ENCODE measurements at regions of chr2 and their contacts with region 1.

Region 1: DNA sequence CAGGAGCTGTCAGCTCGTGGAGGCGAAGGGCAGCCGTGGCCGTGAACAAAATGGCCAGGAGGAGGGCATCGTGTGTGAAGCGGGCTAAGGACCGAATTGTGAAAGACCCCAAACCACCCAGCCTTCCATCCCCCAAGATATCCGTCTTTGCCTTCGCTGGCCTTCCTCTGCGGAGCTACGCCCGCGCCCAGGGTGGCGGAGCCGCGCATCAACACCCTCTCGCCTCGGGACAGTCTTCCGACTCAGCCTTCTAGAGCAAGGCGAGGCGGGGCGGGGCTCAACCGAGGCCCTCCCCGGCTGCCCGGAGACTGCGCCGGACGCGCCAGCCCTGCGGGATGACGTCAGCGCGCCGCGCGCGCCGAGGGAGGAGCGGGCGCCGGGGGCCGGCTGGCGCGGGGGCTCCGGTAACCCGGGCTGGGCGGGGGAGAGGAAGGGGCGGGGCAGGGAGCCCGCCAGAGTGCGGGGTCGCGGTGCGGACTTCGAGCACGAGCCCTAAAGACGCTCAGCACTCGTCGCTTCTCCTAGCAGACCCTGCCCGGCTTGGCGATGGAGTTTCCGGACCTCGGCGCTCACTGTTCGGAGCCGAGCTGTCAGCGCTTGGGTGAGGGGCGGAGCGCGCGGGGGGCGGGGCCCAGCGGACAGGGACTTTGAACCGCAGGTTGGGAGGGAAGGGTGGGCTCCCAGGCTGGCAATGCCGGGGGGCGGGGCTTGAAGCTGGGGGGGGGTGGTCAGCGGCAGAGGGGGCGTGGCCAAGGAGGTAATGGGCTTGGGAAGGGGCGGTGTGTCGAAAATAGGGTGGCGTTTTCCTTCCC is at the start of gene ZFAND2B:
- DNase-seq: peak; percentile 94 to 96
- ATAC-seq: peak; percentile 97 to 99 (median 98)
- H3K4me3 ChIP-seq: peak within 1 kb of the TSS; percentile 33 to 82 (median 70)
- H3K27ac ChIP-seq: peak within 1 kb of the TSS; percentile 80 to 99 (median 95)
- H3K4me1 ChIP-seq: peaks cover 8 to 31% (median 20%) of the 10 kb centered on the region in 9 donors
- H3K27me3 ChIP-seq: no peaks in the 10 kb centered on the region
- CTCF ChIP-seq: peak in 1 of 9 donors; percentile 7
- total RNA-seq, gene ZFAND2B: 11.5 to 19.2 (median 16.4) TPM

Region 2: GRCh38 chr2:219160186-219161017 is 46.2 kb before region 1 on chr2 and contains the start of gene NHEJ1:
- intact Hi-C with region 1: loop called in 2 of 10 experiments (anchors 2 to 5 kb)
- DNase-seq: peak; percentile 97 to 98
- ATAC-seq: peak; percentile 96 to 98 (median 97)
- H3K4me3 ChIP-seq: peak within 1 kb of the TSS; percentile 40 to 74 (median 62)
- H3K27ac ChIP-seq: peak within 1 kb of the TSS; percentile 80 to 94 (median 92)
- H3K4me1 ChIP-seq: peaks cover 0 to 19% (median 11%) of the 10 kb centered on the region in 9 donors
- H3K27me3 ChIP-seq: no peaks in the 10 kb centered on the region
- CTCF ChIP-seq: peak; percentile 99 to 100 (median 99)
- total RNA-seq, gene NHEJ1: 4.7 to 12.0 (median 7.1) TPM

Region 3: GRCh38 chr2:219171231-219171651 is 35.4 kb before region 1 on chr2:
- intact Hi-C with region 1: loop called in 3 of 10 experiments (anchors 2 to 5 kb)
- DNase-seq: peak in 1 of 2 donors; percentile 48
- ATAC-seq: peak; percentile 27 to 77 (median 64)
- H3K4me3 ChIP-seq: no peak overlapping the region
- H3K27ac ChIP-seq: peak overlapping the region in 8 of 10 donors; percentile 26 to 72 (median 48)
- H3K4me1 ChIP-seq: peaks cover 4 to 38% (median 23%) of the 10 kb centered on the region in 9 donors
- H3K27me3 ChIP-seq: no peaks in the 10 kb centered on the region
- CTCF ChIP-seq: peak; percentile 51 to 77 (median 69)

Region 4: DNA sequence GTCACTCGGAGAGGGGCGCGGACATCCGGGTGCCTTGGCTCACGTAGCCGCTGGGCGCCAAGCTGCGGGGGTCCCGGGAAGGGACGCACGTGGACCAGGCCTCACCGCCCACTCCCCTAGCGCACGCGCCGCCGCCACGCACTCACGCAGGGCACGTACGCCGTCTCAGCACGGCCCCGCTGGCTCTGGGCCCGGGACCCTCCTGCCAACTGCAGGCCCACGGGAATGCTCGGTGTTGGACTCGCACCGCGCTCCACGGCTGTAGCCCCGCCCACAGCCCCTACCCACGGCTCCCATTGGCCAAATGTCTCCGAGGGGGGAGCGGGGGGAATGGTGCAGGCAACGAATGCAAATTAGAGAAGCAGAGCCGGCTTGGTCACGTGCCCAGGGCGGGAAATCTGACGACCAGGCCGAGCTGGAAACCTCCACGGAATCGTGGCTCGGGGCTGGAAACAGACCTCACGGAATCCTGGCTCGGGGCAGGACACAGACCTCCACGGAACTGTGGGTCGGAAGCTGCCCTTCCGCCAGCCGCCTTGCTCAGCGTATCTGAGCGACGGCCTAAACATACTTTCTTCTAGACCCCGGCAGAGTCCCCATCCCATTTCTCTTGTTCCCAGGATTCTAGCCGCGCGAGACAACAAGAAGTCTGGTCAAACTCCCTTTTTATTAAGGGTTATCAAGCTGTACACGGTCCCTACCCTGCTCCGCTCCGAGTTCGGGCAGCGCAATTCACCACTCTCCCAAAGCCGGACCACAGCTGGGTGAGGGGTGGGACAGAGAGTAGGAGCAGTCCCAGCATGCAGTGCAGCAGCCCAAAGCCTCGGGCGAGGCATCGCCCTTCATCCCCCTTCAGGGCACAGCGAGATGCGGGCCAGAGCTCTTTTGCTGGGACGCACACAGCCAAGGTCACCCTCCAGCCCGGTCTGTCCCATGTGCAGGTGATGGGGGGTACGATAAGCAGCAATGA is 12.4 kb after region 1 on chr2 and contains the start of gene ABCB6:
- intact Hi-C with region 1: loop called in 1 of 10 experiments (anchors 1 kb)
- DNase-seq: peak; percentile 97 to 98
- ATAC-seq: peak; percentile 90 to 93 (median 92)
- H3K4me3 ChIP-seq: peak within 1 kb of the TSS; percentile 30 to 75 (median 64)
- H3K27ac ChIP-seq: peak within 1 kb of the TSS; percentile 72 to 95 (median 90)
- H3K4me1 ChIP-seq: peaks cover 12 to 40% (median 34%) of the 10 kb centered on the region in 9 donors
- H3K27me3 ChIP-seq: no peaks in the 10 kb centered on the region
- CTCF ChIP-seq: no peak
- total RNA-seq, gene ABCB6: 9.8 to 31.0 (median 14.8) TPM

Measured in heart right ventricle (tissue), 16 donors.